ENCODE measurements at regions of chr6 and their contacts with region 1.

Region 1: DNA sequence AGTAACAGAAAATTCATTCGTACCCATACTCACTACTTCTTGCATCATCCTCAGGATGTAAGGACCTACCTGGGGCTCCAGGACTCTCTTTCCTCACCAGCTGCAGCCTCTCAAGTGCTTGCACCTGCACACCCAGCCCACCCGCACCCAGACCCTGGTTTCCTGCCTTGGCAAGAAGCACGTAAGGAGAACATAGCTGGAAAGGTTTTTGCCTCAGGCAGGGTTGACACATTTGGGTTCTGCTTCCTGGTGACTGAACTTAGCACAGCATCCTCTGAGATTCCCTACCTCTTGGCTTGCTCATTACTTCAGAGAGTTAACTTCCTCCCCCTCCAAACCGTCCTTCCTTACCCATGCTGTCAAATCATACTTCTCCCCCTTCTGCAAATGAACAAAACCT is 556.9 kb downstream of the CD83 start:
- DNase-seq: peak; percentile 12
- H3K4me3 Mint-ChIP-seq: no peak overlapping the region
- H3K27ac Mint-ChIP-seq: peak overlapping the region; percentile 80
- H3K4me1 Mint-ChIP-seq: peaks cover 19% of the 10 kb centered on the region
- H3K27me3 Mint-ChIP-seq: no peaks in the 10 kb centered on the region

Region 2: GRCh38 chr6:14635934-14636591 is 38.4 kb before region 1 on chr6:
- CTCF ChIA-PET with region 1: no interaction called
- intact Hi-C with region 1: no loop called
- DNase-seq: no peak
- H3K4me3 Mint-ChIP-seq: peak overlapping the region; percentile 34
- H3K27ac Mint-ChIP-seq: peak overlapping the region; percentile 61
- H3K4me1 Mint-ChIP-seq: peaks cover 54% of the 10 kb centered on the region
- H3K27me3 Mint-ChIP-seq: no peaks in the 10 kb centered on the region

Region 3: GRCh38 chr6:14660806-14661579 is 13.5 kb before region 1 on chr6:
- CTCF ChIA-PET with region 1: interaction called, 3 read pairs
- intact Hi-C with region 1: loop called (anchors 1 kb)
- DNase-seq: peak; percentile 71
- H3K4me3 Mint-ChIP-seq: no peak overlapping the region
- H3K27ac Mint-ChIP-seq: no peak overlapping the region
- H3K4me1 Mint-ChIP-seq: peaks cover 44% of the 10 kb centered on the region
- H3K27me3 Mint-ChIP-seq: no peaks in the 10 kb centered on the region